PC-9 (cell line): ENCODE measurements at regions of chr4 and their contacts with region 1.

Region 1: DNA sequence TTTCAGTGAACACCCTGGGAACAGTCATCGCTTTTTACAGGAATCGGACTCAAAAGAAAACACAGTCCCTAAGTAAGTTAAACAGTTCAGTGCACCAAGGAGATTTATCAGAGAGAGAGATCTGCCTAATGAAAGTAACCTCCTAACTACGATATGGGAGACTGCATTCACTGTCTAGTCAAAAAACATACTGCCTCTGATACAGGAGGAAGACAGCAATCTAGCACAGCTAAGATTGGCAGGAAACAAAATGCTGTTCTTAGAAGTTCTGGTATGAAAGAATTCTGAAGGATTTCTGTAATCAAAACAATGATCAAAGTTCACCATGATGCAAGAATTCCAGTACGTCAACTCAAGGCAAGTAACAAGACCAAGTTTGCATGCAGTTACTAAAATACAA is 92.8 kb downstream of the MAML3 start:
- DNase-seq: no peak
- H3K4me3 ChIP-seq: no peak overlapping the region
- H3K27ac ChIP-seq: peak overlapping the region; percentile 37
- H3K4me1 ChIP-seq: peaks cover 38% of the 10 kb centered on the region
- H3K27me3 ChIP-seq: no peaks in the 10 kb centered on the region
- CTCF ChIP-seq: no peak

Region 2: GRCh38 chr4:139833151-139833910 is 227.9 kb before region 1 on chr4:
- CTCF ChIA-PET with region 1: no interaction called
- POLR2A ChIA-PET with region 1: no interaction called
- intact Hi-C with region 1: no loop called
- DNase-seq: no peak
- H3K4me3 ChIP-seq: no peak overlapping the region
- H3K27ac ChIP-seq: no peak overlapping the region
- H3K4me1 ChIP-seq: no peaks in the 10 kb centered on the region
- H3K27me3 ChIP-seq: no peaks in the 10 kb centered on the region
- CTCF ChIP-seq: no peak

Region 3: GRCh38 chr4:140085062-140085622 is 23.9 kb after region 1 on chr4:
- CTCF ChIA-PET with region 1: no interaction called
- POLR2A ChIA-PET with region 1: interaction called, 11 read pairs
- intact Hi-C with region 1: no loop called
- DNase-seq: peak in 1 of 2 experiments; percentile 76
- H3K4me3 ChIP-seq: peak overlapping the region; percentile 11; the same call in 1 of the 2 replicates
- H3K27ac ChIP-seq: peak overlapping the region; percentile 76
- H3K4me1 ChIP-seq: peaks cover 57% of the 10 kb centered on the region
- H3K27me3 ChIP-seq: no peaks in the 10 kb centered on the region
- CTCF ChIP-seq: no peak